Gastrocnemius medialis (tissue), 4 donors: ENCODE measurements at regions of chr19 and their contacts with region 1.

Region 1: DNA sequence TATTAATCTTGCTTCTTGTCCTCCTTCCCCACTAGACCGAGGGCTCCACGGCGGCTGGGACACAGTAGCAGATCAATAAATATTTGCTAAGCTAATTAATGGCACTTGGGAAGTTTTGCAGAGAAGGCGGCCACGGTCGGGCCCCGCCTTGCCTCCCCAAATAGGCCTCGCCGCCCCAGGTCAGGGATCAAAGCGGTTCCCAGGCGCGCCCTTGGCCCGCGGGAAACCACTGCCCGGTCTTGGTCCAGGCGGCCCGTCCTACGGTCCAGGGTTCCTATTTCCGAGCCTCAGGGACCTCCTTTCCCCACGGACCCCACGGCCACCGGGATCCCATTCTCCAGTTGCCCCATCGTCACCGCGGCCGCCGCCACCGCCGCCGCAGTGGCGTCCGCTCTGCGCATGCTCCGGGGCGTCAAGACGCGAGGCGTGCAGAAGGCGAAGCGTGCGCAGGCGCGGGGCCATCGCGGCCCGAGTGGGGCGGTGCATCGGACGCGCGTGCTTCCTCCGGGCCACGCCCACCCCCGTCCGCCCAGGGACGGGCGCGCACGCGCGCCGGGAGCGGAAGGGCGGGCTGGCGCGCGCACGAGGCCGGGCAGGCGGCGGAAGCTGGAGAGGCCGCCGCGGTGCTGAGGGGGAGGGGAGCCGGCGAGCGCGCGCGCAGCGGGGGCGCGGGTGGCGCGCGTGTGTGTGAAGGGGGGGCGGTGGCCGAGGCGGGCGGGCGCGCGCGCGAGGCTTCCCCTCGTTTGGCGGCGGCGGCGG is at the start of gene SMARCA4:
- DNase-seq: peak; percentile 93 to 97
- ATAC-seq: peak; percentile 91 to 93
- H3K4me3 ChIP-seq: peak within 1 kb of the TSS; percentile 72 to 91 (median 86)
- H3K27ac ChIP-seq: peak within 1 kb of the TSS; percentile 88 to 99 (median 95)
- H3K4me1 ChIP-seq: peaks cover 23 to 24% of the 10 kb centered on the region in 2 donors
- H3K27me3 ChIP-seq: no peaks in the 10 kb centered on the region
- CTCF ChIP-seq: no peak
- POLR2A ChIP-seq: peak; percentile 96 to 97
- total RNA-seq, gene SMARCA4: 24.0 to 72.6 (median 68.7) TPM

Region 2: GRCh38 chr19:10769533-10770491 is 190.7 kb before region 1 on chr19:
- in situ Hi-C with region 1: no loop called
- intact Hi-C with region 1: no loop called
- DNase-seq: peak; percentile 69 to 80
- ATAC-seq: peak; percentile 94 to 96
- H3K4me3 ChIP-seq: peak overlapping the region in 1 of 4 donors; percentile 23
- H3K27ac ChIP-seq: peak overlapping the region; percentile 75 to 85 (median 82)
- H3K4me1 ChIP-seq: peaks cover 43 to 50% of the 10 kb centered on the region in 2 donors
- H3K27me3 ChIP-seq: no peaks in the 10 kb centered on the region
- CTCF ChIP-seq: peak in 4 of 5 experiments; percentile 35 to 61 (median 36)
- POLR2A ChIP-seq: no peak

Region 3: GRCh38 chr19:10855879-10856522 is 104.5 kb before region 1 on chr19:
- in situ Hi-C with region 1: no loop called
- intact Hi-C with region 1: no loop called
- DNase-seq: no peak
- ATAC-seq: no peak
- H3K4me3 ChIP-seq: no peak overlapping the region
- H3K27ac ChIP-seq: no peak overlapping the region
- H3K4me1 ChIP-seq: no peaks in the 10 kb centered on the region
- H3K27me3 ChIP-seq: no peaks in the 10 kb centered on the region
- CTCF ChIP-seq: peak in 1 of 5 experiments; percentile 36
- POLR2A ChIP-seq: no peak

Region 4: DNA sequence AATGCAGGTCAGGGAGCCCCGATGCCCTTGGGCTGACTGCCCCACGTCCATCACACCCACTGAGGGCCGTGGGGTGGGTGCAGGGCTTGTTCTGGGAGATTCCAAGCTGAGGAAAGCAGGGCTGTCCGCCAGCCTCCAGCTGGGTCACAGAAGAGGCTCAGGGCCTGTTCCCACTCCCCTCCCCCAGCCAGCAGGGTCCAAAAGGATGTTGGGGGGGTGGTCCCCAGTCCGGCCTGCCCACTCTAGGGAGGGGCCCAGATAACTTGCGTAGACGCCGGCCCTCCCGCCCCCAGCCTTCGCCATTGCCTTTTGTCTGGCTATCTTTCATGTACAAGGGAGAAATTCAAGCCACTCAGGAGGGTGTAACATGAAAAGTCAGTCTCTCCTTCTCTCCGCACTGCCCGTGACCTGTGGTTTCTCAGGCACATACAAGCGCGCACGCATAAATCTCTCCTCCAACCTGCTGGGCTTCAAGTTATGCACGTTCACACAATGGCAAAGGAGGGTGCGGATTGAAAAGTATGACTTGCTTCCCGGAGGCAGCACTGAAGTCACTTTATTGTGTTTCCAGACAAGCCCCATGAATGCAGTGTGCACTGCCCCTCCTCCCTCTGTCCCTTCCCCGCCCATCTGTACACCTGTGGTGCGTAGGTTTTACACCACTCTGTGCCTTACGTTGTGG is 68.9 kb before region 1 on chr19:
- in situ Hi-C with region 1: no loop called
- intact Hi-C with region 1: no loop called
- DNase-seq: peak; percentile 48 to 68
- ATAC-seq: peak; percentile 49 to 68
- H3K4me3 ChIP-seq: peak overlapping the region in 1 of 4 donors; percentile 9
- H3K27ac ChIP-seq: peak overlapping the region; percentile 84 to 95 (median 90)
- H3K4me1 ChIP-seq: peaks cover 73 to 98% of the 10 kb centered on the region in 2 donors
- H3K27me3 ChIP-seq: no peaks in the 10 kb centered on the region
- CTCF ChIP-seq: no peak
- POLR2A ChIP-seq: no peak

Region 5: GRCh38 chr19:10928525-10929401 is 31.7 kb before region 1 on chr19 and contains the starts of genes TIMM29 and YIPF2:
- in situ Hi-C with region 1: no loop called
- intact Hi-C with region 1: loop called (anchors 2 kb)
- DNase-seq: peak; percentile 98 to 99
- ATAC-seq: peak; percentile 98 to 100
- H3K4me3 ChIP-seq: peak within 1 kb of the TSS; percentile 86 to 96 (median 88)
- H3K27ac ChIP-seq: peak within 1 kb of the TSS; percentile 82 to 92 (median 90)
- H3K4me1 ChIP-seq: peaks cover 17 to 31% of the 10 kb centered on the region in 2 donors
- H3K27me3 ChIP-seq: no peaks in the 10 kb centered on the region
- CTCF ChIP-seq: no peak
- POLR2A ChIP-seq: peak; percentile 66 to 77
- total RNA-seq, gene TIMM29: 28.7 to 54.5 (median 34.8) TPM
- total RNA-seq, gene YIPF2: 17.8 to 30.8 (median 24.2) TPM

Region 6: DNA sequence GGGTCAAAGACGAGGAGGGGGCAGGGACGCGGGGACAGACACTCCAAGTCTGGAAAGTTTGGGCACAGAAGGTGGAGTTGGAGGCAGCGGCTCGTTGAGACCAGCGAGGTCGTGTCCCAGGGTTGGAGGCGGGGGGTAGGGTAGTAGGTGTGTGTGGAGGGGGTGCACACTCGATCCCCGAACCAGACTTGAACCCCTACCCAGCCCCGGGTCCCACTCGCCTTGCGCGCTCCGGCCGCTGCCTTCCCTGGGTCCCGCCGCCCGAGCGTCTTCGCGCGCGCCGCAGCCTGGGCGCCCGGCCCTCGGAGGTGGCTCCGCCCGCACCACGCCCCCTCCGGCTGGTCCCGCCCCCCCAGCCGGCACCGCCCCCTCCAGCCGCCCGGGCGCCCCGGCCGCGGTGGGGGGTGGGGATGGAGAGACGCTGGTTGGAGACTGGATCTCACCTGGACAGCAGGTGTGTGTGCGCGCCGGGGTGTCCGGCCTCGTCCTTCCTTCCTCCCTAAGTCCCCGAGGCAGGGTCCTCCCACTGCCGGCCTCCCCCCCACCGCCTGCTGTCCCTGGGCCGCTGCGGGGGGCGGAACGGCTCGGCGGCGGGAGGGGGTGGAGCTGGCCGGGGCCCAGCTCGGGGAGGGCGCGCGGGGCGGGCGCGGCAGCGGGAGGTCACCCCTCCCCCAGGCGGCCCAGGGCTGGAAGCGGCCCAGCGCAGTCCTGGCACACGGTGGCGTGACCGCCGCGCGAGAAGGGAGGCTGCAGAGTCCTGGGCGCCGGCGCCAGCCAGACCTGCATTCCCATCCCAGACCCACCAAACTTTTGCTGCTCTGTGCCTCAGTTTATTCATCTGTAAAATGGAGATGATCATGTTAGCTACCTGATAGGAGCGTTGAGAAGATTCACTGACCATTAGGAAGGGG is 237.0 kb after region 1 on chr19 and contains the start of gene KANK2:
- in situ Hi-C with region 1: no loop called
- intact Hi-C with region 1: loop called (anchors 10 kb)
- DNase-seq: peak; percentile 47 to 74
- ATAC-seq: peak; percentile 88 to 89
- H3K4me3 ChIP-seq: peak within 1 kb of the TSS; percentile 56 to 78 (median 75)
- H3K27ac ChIP-seq: peak within 1 kb of the TSS; percentile 83 to 92 (median 87)
- H3K4me1 ChIP-seq: peaks cover 10 to 18% of the 10 kb centered on the region in 2 donors
- H3K27me3 ChIP-seq: no peaks in the 10 kb centered on the region
- CTCF ChIP-seq: no peak
- POLR2A ChIP-seq: peak; percentile 80 to 85
- total RNA-seq, gene KANK2: 37.7 to 192 (median 149) TPM